Activated CD4-positive, alpha-beta T cell treated with anti-CD3 and anti-CD28 coated beads, Interleukin-2, amount 10 ng/mL, durations not matched to agents 24 days and 14 days (primary cell): ENCODE measurements at regions of chr10 and their contacts with region 1.

Region 1: GRCh38 chr10:79331709-79332108 is 15.6 kb upstream of the PPIF start:
- DNase-seq: peak; percentile 95
- H3K4me3 Mint-ChIP-seq: peak overlapping the region; percentile 56
- H3K27ac Mint-ChIP-seq: peak overlapping the region; percentile 95
- H3K4me1 Mint-ChIP-seq: peaks cover 57% of the 10 kb centered on the region
- H3K27me3 Mint-ChIP-seq: no peaks in the 10 kb centered on the region

Region 2: GRCh38 chr10:79260786-79261740 is 70.6 kb before region 1 on chr10:
- intact Hi-C with region 1: no loop called
- DNase-seq: no peak
- H3K4me3 Mint-ChIP-seq: no peak overlapping the region
- H3K27ac Mint-ChIP-seq: no peak overlapping the region
- H3K4me1 Mint-ChIP-seq: peaks cover 29% of the 10 kb centered on the region
- H3K27me3 Mint-ChIP-seq: no peaks in the 10 kb centered on the region

Region 3: DNA sequence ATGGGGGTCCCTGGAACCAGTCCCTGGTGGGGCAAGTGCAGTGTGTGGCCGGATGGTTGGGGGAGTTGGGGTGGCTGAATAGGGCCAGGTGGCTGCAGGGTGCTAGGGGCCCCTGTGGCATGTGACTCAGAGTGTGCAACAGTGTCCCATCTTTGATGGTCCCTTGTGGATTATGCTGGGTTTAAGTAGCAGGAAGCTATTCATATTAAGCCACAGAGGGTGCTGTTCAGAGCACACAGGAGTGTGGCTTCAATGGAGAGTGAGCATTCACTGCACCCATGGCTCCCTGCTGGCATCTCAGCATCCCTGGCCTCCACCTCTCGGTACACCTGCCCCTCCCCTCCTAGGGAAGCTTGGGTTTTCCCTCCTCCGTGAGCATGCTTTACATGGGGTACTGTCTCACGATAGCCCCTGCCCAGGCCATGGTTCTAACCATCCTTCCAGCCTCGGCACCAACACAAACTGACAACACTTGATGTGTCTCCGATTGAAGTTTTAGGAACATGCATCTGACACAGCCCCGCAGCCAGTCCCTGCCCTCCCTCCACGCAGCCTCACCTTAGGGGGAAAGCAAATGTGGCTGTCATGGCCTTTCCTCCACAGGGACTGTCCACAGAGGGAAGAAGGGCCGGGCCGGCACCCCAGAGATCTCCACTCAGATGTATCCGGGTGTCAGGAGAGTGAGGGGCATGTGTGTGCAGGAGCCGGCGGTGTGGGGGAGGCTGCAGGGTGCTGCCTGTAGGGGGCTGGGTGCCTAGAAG is 14.9 kb before region 1 on chr10:
- intact Hi-C with region 1: loop called (anchors 1 kb)
- DNase-seq: peak; percentile 75
- H3K4me3 Mint-ChIP-seq: peak overlapping the region; percentile 76
- H3K27ac Mint-ChIP-seq: peak overlapping the region; percentile 90
- H3K4me1 Mint-ChIP-seq: peaks cover 59% of the 10 kb centered on the region
- H3K27me3 Mint-ChIP-seq: peaks cover 3% of the 10 kb centered on the region

Region 4: DNA sequence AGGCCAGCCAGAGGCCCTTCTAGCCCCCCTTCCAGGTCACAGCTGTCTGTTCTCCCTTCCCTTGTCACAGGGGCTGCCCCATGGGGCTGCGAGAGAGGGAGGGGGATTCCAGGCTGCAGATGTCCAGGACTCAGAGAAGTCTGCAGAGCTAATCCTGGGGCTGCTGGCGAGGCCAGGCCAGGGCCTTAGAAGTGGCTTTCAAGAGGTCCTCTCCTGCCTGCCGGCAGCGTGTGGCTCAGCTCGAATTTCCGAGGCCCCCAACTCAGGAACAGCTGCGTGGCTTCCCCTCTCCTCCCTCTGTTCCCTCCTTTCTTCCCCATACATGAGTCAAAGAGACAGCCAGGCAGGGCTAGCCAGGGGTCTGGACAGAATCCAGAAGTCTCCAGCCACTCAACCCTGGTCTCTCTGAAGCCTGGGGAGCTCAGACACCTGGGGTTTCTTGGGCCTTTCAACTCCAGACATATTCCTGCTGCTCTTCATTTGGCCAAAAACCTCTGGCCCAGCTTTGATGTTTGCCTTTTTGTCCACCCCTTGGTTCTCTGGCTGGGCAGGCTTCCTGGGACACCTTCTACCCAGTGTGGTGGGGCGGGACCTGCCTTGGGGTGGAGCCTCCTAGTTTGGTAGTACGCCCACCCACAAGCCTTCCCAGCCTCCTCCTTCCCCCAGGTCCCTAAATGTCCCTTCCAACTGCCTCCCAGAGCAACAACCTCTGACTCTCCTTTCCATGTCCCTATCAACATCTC is 158.9 kb after region 1 on chr10:
- intact Hi-C with region 1: no loop called
- DNase-seq: no peak
- H3K4me3 Mint-ChIP-seq: no peak overlapping the region
- H3K27ac Mint-ChIP-seq: no peak overlapping the region
- H3K4me1 Mint-ChIP-seq: no peaks in the 10 kb centered on the region
- H3K27me3 Mint-ChIP-seq: peaks cover 20% of the 10 kb centered on the region